ENCODE measurements at regions of chr17 and their contacts with region 1.

Region 1: GRCh38 chr17:7931709-7932482 is at the starts of genes CNTROB and TRAPPC1:
- DNase-seq: peak; percentile 100

Region 2: GRCh38 chr17:7687908-7688807 is 243.7 kb before region 1 on chr17 and contains the start of gene WRAP53:
- intact Hi-C with region 1: no loop called
- DNase-seq: peak; percentile 96 to 100 (median 98)

Region 3: DNA sequence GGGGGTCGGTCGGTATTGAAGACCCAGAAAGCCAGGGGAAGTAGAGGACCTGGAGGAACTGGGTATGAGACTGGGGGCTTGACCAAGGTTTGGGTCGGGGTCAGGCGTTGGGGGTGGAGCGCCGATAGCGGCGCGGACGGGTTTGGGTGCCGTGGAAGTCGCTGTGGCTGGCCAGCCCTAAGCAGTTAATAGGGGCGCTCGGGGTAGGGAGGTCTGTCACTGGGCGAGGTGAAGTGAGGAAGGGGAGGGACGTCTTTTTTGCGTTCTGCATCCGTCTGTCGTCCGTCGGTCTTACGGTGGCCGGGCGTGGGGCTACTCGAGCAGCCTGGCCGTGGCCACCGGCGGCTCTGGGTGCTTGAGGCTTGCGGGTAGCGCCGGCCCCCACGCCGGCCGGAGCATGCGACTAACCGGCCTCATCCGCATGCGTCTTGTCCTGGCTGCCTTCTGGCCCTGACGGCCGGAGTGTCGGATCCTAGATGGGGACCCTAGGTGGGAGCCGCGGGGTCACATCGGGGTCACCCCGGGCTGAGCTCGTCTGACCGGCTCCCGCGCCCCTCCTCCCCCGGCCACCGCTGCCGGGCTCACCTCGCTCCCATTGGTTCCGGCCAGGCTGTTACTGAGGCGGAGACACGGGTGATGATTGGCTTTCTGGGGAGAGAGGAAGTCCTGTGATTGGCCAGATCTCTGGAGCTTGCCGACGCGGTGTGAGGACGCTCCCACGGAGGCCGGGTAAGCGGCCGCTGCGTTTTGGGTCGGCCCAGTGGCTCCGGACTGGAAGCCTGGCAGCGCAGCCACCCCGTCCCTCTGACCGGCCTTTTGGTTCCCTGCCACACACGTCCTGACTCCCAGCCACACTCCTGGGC is 87.4 kb before region 1 on chr17:
- intact Hi-C with region 1: loop called (anchors 5 kb)
- DNase-seq: peak; percentile 88 to 99 (median 92)

Region 4: GRCh38 chr17:7903154-7904103 is 28.5 kb before region 1 on chr17:
- intact Hi-C with region 1: no loop called
- DNase-seq: peak in 3 of 10 donors; percentile 44 to 62 (median 55)

Region 5: GRCh38 chr17:7915611-7916382 is 16.1 kb before region 1 on chr17 and contains the start of gene RNF227:
- intact Hi-C with region 1: loop called (anchors 1 kb)
- DNase-seq: peak; percentile 77 to 97 (median 83)